AG04450 (cell line): ENCODE measurements at regions of chr4 and their contacts with region 1.

Region 1: DNA sequence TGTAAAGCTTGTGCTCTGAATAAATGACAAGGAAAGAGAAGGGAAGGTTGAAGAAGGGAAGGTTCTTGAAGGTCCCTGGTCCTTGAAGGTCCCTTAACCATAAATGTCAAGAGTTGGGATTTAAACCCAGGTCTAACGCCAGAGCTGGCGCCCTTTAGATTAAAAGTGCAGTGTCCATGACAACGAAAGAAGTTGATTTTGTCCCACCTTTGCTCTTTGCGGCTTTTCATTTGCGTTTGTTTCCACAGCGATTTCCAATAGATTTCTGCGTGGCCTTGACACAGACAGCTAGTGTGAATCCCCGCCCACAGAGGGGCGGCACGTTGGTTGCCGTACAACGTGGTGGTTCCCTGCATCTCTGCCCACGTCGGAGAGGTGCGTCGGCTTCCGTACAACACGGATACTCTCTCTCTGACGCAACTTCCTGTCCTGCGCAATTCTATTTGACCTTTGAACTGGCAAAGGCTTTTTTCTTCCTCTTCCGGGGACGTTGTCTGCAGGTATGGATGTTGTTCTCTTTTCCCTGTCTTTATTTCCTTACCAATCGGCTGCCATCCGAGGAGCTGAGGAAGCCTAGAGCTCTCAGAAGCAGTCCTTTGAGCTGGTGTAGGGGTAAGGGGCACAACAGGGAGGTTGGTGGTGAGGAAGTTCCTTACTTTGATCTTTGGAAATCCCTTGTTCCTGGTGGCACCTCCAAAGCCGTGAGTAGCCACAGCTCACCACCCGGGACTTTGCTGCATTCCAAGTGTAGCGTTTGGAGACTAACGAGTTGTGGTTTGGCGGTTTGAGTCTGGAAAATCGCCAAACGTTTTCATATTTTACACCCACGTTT is at the start of gene RPL34:
- DNase-seq: peak; percentile 96
- H3K4me3 ChIP-seq: peak within 1 kb of the TSS; percentile 69
- H3K27ac ChIP-seq: peak within 1 kb of the TSS; percentile 72
- H3K27me3 ChIP-seq: no peaks in the 10 kb centered on the region
- CTCF ChIP-seq: no peak
- polyA plus RNA-seq, gene RPL34: 2,621 and 2,960 TPM in 2 replicates

Region 2: GRCh38 chr4:108650212-108651013 is 30.1 kb after region 1 on chr4 and contains the start of gene OSTC:
- CTCF ChIA-PET with region 1: interaction called, 3 read pairs
- POLR2A ChIA-PET with region 1: interaction called, 17 read pairs
- DNase-seq: peak; percentile 93
- H3K4me3 ChIP-seq: peak within 1 kb of the TSS; percentile 88
- H3K27ac ChIP-seq: peak within 1 kb of the TSS; percentile 87
- H3K27me3 ChIP-seq: no peaks in the 10 kb centered on the region
- CTCF ChIP-seq: peak; percentile 12
- polyA plus RNA-seq, gene OSTC: 238 and 320 TPM in 2 replicates